ENCODE measurements at regions of chr3 and their contacts with region 1.

Region 1: GRCh38 chr3:89851974-89852621 is 744.7 kb downstream of the EPHA3 start:
- DNase-seq: peak; percentile 14
- ATAC-seq: peak; percentile 63
- H3K4me3 ChIP-seq: no peak overlapping the region
- H3K27ac ChIP-seq: no peak overlapping the region
- H3K4me1 ChIP-seq: no peaks in the 10 kb centered on the region
- H3K27me3 ChIP-seq: no peaks in the 10 kb centered on the region
- CTCF ChIP-seq: peak; percentile 40
- POLR2A ChIP-seq: no peak
- RAD21 ChIP-seq: peak; percentile 47

Region 2: DNA sequence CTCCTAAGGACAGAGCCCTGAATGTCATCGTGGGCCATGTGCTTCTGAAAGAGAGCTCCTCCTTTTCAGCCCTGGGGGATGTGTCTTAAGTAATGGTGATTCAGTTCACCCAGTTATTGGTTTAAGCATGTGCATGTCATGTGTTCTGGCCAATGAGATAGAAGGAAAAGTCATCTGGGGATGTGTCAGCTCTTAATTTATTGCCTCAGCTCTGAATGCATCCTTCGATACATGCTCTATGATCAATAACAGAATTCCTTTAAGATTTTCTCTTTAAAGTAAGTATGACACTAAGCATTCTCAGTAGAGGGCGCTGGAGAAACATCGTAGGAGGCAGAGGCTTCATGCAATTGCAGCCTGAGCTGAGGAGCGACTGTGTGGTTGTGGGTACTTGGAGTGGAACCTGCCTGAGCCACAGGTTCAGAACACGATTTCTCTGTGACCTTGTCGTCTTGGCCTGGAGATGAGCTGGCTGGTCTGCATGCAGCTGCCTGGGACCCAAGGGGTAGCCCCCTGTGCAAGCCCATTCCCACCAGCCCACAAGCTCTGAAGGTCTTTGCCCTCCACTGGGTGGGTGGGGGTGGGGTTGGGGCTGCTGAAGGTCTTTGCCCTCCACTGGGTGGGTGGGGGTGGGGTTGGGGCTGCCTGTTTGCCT is 1632.8 kb before region 1 on chr3:
- CTCF ChIA-PET with region 1: interaction called, 3 read pairs
- POLR2A ChIA-PET with region 1: no interaction called
- dilution Hi-C with region 1: no loop called
- in situ Hi-C with region 1: loop called (anchors 25 kb)
- intact Hi-C with region 1: loop called (anchors 5 kb)
- DNase-seq: peak; percentile 49
- ATAC-seq: peak; percentile 87
- H3K4me3 ChIP-seq: no peak overlapping the region
- H3K27ac ChIP-seq: no peak overlapping the region
- H3K4me1 ChIP-seq: no peaks in the 10 kb centered on the region
- H3K27me3 ChIP-seq: no peaks in the 10 kb centered on the region
- CTCF ChIP-seq: peak; percentile 65
- POLR2A ChIP-seq: no peak
- RAD21 ChIP-seq: peak; percentile 70

Region 3: DNA sequence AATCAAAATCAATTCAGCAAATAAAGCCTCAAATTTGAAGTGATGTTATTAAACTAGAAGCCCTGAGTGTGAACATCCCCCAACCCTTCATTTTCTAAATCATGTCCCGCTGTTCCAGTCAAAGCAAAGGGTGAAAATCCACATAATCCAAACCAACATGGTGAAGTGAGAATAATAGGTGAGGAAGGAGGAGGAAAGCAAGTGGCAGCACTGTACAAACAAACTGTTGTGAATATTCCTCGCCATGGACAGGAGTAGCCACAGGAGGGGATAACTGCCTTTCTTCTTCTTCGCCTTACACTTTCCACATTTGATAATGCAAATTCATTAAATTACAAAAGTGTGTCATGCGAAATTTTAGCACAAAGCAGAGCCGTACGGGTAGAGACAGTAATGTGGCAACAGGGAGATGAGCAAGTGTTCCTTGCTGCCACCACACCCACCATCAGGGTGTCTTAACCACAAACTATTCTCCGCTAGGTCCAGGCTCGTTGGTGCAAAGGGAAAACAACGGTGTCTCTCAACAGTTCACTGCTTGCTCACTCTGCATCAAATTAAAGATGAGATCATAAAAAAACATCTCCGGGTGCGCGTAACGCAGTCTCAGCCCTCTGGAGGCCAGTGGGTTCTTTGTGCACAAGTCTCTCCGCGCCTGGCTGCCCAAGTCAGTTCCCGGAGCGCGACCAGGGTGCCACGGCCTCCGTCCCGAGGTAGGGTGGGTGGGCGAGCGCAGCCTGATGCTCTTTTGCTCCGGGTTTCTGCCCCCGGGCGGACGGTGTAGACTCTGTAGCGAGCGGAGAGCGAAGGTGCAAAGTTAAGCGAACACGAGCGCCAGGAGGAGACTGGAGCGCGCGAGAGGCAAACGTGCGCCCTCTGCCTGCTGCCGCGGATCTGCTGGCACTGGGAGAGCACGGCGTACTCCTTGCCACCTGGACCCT is 737.9 kb before region 1 on chr3:
- CTCF ChIA-PET with region 1: no interaction called
- POLR2A ChIA-PET with region 1: no interaction called
- dilution Hi-C with region 1: no loop called
- in situ Hi-C with region 1: no loop called
- intact Hi-C with region 1: loop called (anchors 5 kb)
- DNase-seq: peak; percentile 42
- ATAC-seq: peak; percentile 95
- H3K4me3 ChIP-seq: peak overlapping the region; percentile 58
- H3K27ac ChIP-seq: no peak overlapping the region
- H3K4me1 ChIP-seq: no peaks in the 10 kb centered on the region
- H3K27me3 ChIP-seq: no peaks in the 10 kb centered on the region
- CTCF ChIP-seq: peak; percentile 51
- POLR2A ChIP-seq: no peak
- RAD21 ChIP-seq: peak; percentile 43

Region 4: GRCh38 chr3:89405176-89405575 is 446.9 kb before region 1 on chr3:
- CTCF ChIA-PET with region 1: no interaction called
- POLR2A ChIA-PET with region 1: no interaction called
- dilution Hi-C with region 1: no loop called
- in situ Hi-C with region 1: no loop called
- intact Hi-C with region 1: loop called (anchors 10 kb)
- DNase-seq: no peak
- ATAC-seq: no peak
- H3K4me3 ChIP-seq: no peak overlapping the region
- H3K27ac ChIP-seq: no peak overlapping the region
- H3K4me1 ChIP-seq: no peaks in the 10 kb centered on the region
- H3K27me3 ChIP-seq: no peaks in the 10 kb centered on the region
- CTCF ChIP-seq: no peak
- POLR2A ChIP-seq: no peak
- RAD21 ChIP-seq: no peak

Region 5: DNA sequence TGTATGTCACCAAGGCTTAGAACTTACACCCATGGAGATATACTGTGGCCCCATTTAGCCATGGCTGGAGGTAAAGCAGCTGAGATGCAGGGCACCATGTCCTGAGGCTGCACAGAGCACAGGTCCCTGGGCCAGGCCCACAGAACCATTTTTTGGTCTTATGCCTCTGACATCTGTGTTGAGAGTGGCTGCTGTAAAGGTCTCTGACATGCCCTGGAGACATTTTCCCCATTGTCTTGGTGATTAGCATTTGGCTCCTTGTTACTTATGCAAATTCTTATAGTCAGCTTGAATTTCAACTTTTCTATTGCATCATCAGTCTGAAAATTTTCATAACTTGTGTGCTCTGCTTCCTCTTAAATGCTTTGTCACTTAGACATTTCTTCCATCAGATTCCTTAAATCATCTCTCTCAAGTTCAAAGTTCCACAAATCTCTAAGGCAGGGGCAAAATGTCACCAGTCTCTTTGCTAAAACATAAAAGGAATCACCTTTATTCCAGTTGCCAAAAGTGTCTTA is 43.4 kb before region 1 on chr3:
- CTCF ChIA-PET with region 1: no interaction called
- POLR2A ChIA-PET with region 1: no interaction called
- dilution Hi-C with region 1: no loop called
- in situ Hi-C with region 1: no loop called
- intact Hi-C with region 1: no loop called
- DNase-seq: no peak
- ATAC-seq: no peak
- H3K4me3 ChIP-seq: no peak overlapping the region
- H3K27ac ChIP-seq: no peak overlapping the region
- H3K4me1 ChIP-seq: no peaks in the 10 kb centered on the region
- H3K27me3 ChIP-seq: no peaks in the 10 kb centered on the region
- CTCF ChIP-seq: no peak
- POLR2A ChIP-seq: no peak
- RAD21 ChIP-seq: no peak

Region 6: GRCh38 chr3:89947337-89947954 is 95.3 kb after region 1 on chr3:
- CTCF ChIA-PET with region 1: no interaction called
- POLR2A ChIA-PET with region 1: no interaction called
- dilution Hi-C with region 1: no loop called
- in situ Hi-C with region 1: loop called (anchors 25 kb)
- intact Hi-C with region 1: no loop called
- DNase-seq: no peak
- ATAC-seq: no peak
- H3K4me3 ChIP-seq: no peak overlapping the region
- H3K27ac ChIP-seq: no peak overlapping the region
- H3K4me1 ChIP-seq: no peaks in the 10 kb centered on the region
- H3K27me3 ChIP-seq: no peaks in the 10 kb centered on the region
- CTCF ChIP-seq: no peak
- POLR2A ChIP-seq: no peak
- RAD21 ChIP-seq: no peak

Measured in IMR-90 (cell line).